ENCODE measurements at regions of chr17 and their contacts with region 1.

Region 1: DNA sequence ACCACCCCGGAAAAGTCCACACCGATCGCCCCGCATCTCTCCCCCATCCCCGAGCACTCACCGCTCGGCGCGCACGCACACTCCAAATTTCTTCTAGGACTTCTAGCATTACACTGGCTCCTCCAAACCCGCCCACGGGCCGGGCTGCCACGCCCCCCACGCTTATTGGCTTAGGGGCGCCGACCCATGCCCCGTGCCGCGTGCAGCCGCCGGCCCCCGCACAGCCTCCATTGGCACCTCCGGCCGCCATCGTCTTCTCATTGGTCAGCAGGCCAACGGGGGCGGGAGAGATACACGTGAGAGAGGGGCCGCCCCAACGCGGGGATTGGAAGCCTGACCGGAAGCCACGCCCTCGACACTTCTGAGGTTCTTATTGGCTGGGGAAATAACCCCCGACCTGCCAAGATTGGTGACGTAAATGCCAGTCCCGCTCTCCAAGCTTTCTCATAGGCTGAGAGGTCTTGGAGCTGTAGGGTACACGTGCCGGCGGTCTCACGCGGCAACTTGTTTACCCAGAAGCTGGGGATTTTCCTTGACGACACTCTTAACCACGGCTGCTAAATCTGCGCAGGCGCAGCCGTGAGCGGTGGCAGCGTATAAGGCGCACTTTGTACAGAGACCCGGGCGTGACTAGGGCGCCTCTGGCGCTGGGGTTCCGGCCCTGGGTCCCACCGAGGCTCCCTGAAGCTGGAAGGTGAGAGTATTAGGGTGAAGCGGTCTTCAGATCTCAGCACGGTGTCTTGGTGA is 4.2 kb upstream of the PER1 start:
- DNase-seq: peak; percentile 100
- H3K4me3 ChIP-seq: peak overlapping the region; percentile 70
- CTCF ChIP-seq: no peak

Region 2: GRCh38 chr17:8073627-8074484 is 82.6 kb before region 1 on chr17:
- CTCF ChIA-PET with region 1: interaction called, 12 read pairs
- POLR2A ChIA-PET with region 1: no interaction called
- DNase-seq: no peak
- H3K4me3 ChIP-seq: no peak overlapping the region
- CTCF ChIP-seq: peak; percentile 87

Region 3: DNA sequence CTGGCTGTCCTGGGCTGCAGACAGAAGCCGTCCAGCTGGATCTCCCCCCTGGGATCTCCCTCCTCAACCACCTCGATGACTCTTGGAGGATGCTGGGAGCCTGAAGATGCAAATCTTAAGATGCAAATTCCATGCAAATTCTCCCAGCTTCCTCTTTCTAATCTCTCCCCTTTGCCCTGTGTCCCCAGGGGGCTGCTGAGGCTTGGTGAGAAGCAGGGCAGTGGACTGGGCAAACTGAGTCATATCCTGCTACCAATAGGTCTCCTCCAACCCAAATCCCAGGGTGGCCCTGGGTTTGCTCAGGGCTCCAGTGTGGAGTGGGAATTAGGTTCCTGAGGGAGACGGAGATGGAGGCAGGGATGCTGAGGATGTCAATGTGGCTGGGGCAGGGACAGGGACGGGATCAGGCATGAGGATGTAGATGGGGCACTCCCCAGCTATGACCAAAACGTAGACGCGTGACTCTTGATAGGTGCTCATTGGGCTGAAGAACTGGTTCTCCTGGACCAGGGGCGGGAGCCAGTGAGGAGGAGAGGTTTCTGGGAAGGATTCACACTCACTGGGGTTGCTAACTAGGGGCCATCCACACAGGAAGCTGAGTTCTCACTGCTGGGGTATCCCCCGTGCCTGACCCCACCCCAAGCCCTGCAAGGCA is 65.3 kb before region 1 on chr17:
- CTCF ChIA-PET with region 1: interaction called, 27 read pairs
- POLR2A ChIA-PET with region 1: no interaction called
- DNase-seq: no peak
- H3K4me3 ChIP-seq: no peak overlapping the region
- CTCF ChIP-seq: no peak

Region 4: DNA sequence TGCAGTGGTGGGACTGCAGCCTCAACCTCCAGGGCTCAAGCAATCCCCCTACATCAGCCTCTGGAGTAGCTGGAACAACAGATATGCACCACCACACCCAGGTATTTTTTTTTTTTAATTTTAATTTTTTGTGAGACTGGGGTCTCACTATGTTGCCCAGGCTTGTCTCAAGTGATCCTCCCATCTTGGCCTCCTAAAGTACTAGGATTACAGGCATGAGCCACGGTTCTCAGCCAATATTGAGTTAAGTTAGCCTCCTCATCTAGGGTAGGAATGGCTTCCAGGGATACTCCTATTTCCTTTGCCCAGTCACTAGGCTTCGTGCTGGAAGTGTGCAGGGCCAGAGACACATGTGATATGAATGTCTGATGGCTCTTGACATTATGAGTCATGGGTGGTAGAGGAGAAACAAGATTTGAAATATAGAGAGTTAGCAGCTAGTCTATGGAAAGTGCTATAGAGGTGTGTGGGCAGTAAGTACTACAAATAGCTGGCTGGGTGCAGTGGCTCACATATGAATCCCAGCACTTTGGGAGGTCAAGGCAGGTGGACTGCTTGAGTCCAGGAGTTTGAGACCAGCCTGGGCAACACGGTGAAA is 24.5 kb before region 1 on chr17:
- CTCF ChIA-PET with region 1: interaction called, 39 read pairs
- POLR2A ChIA-PET with region 1: interaction called, 4 read pairs
- DNase-seq: no peak
- H3K4me3 ChIP-seq: no peak overlapping the region
- CTCF ChIP-seq: no peak

Region 5: DNA sequence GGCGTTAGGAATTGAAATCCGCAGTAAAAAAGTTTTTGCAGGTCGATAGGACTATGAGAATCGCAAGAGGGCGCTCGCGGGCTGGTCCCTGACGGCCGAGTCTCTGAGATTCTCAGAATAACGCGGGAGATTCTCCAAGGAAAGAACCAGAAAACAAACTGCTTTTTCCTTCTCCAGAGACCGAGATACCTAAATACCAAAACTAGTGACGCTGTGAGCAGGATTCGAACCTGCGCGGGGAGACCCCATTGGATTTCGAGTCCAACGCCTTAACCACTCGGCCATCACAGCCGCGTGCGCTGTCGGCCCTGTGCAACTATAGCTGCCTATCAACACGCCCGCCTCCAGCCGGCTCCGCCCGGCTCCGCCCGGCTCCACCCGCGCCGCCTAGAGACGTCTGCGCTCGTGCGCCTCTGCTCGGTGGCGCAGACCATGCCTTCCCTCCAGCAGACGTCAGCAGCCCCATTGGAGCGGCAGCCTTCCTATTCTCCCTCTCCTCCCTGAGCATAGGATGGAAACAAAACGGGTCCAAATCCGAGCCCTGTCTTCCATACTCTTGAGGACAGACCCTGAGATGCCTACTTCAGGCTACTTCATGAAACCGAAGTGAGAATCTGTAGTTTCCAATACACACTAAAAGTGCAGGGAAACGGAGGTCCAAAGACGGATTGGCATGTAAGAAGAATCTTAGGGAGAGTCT is 17.6 kb before region 1 on chr17:
- CTCF ChIA-PET with region 1: interaction called, 39 read pairs
- POLR2A ChIA-PET with region 1: interaction called, 9 read pairs
- DNase-seq: peak; percentile 85
- H3K4me3 ChIP-seq: peak overlapping the region; percentile 65
- CTCF ChIP-seq: peak; percentile 79

Region 6: DNA sequence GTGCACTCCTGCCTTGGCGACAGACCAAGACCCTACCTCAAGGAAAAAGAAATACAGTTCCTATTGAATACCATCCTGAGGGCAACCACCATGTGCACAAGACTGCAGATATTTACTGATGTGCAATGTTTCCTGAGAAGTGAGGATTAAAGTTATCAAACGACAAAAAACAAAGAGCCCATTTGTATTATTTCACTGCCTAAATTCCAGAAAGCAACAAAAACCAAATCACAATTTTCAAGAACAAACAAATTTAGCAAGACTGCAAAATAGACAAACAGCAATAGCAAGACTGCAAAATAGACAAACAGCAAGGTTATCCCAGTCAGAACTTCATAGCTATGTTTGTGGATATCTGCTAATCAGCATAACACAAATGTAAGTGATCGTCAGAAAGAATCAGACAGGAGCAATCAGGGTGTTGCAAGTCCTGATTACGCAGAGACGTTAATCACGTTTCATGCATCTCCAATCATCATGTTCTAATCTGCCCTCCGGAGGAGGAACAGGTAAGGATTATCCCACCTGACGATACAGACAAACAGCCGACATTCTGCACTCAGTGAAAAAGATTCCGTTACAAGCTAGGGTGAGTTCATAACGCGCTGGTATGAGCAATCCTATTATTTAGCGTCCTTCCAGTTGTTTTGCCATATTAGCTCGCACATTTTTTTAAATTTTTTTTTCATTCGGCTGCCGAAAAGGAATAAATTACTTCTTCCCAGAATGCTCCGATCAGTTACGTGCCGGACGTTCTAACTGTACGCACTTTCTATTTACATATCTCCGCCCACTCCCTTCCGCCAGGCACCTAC is 16.8 kb after region 1 on chr17:
- CTCF ChIA-PET with region 1: interaction called, 13 read pairs
- POLR2A ChIA-PET with region 1: interaction called, 17 read pairs
- DNase-seq: peak; percentile 91
- H3K4me3 ChIP-seq: peak overlapping the region; percentile 55
- CTCF ChIP-seq: no peak